Left lung (tissue), 14 donors: ENCODE measurements at regions of chr12 and their contacts with region 1.

Region 1: GRCh38 chr12:52582971-52583456 is 9.4 kb upstream of the KRT74 start:
- DNase-seq: peak in 2 of 4 donors; percentile 31 to 44
- ATAC-seq: peak; percentile 95
- H3K4me3 ChIP-seq: no peak overlapping the region
- H3K27ac ChIP-seq: no peak overlapping the region
- H3K4me1 ChIP-seq: no peaks in the 10 kb centered on the region
- H3K27me3 ChIP-seq: peaks cover 0 to 40% of the 10 kb centered on the region in 2 donors
- CTCF ChIP-seq: peak; percentile 60 to 69

Region 2: GRCh38 chr12:52879394-52880351 is 296.7 kb after region 1 on chr12:
- intact Hi-C with region 1: loop called in 1 of 2 experiments (anchors 5 kb)
- DNase-seq: peak; percentile 75 to 92 (median 82)
- ATAC-seq: peak; percentile 94
- H3K4me3 ChIP-seq: peak overlapping the region in 1 of 2 donors; percentile 20
- H3K27ac ChIP-seq: no peak overlapping the region
- H3K4me1 ChIP-seq: peaks cover 6 to 23% of the 10 kb centered on the region in 2 donors
- H3K27me3 ChIP-seq: peaks cover 0 to 33% of the 10 kb centered on the region in 2 donors
- CTCF ChIP-seq: peak; percentile 46 to 76

Region 3: GRCh38 chr12:52980693-52981423 is 397.8 kb after region 1 on chr12:
- intact Hi-C with region 1: loop called in 1 of 2 experiments (anchors 10 kb)
- DNase-seq: peak in 3 of 4 donors; percentile 82 to 94 (median 84)
- ATAC-seq: peak; percentile 98
- H3K4me3 ChIP-seq: no peak overlapping the region
- H3K27ac ChIP-seq: no peak overlapping the region
- H3K4me1 ChIP-seq: no peaks in the 10 kb centered on the region
- H3K27me3 ChIP-seq: peaks cover 0 to 10% of the 10 kb centered on the region in 2 donors
- CTCF ChIP-seq: peak; percentile 96 to 97